GM12878 (cell line): ENCODE measurements at regions of chr7 and their contacts with region 1.

Region 1: GRCh38 chr7:27095897-27096767 is at the start of gene HOXA1:
- DNase-seq: peak; percentile 48
- ATAC-seq: peak; percentile 92
- H3K4me3 ChIP-seq: peak within 1 kb of the TSS; percentile 92
- H3K27ac ChIP-seq: no peak within 1 kb of the TSS
- H3K4me1 ChIP-seq: peaks cover 6% of the 10 kb centered on the region
- H3K27me3 ChIP-seq: peaks cover 0 to 7% of the 10 kb centered on the region in 2 experiments; a peak in 3 of 4 replicates
- CTCF ChIP-seq: no peak; a peak in 1 of 6 replicates
- EP300 ChIP-seq: no peak
- POLR2A ChIP-seq: peak; percentile 65
- RAD21 ChIP-seq: no peak
- polyA plus RNA-seq, gene HOXA1: 0.10 TPM in 1 of 2 experiments, not detected in the other

Region 2: GRCh38 chr7:26853788-26854393 is 242.2 kb before region 1 on chr7:
- CTCF ChIA-PET with region 1: interaction called, 7 read pairs
- POLR2A ChIA-PET with region 1: interaction called, 4 read pairs
- RAD21 ChIA-PET with region 1: interaction called, 4 read pairs
- SMC1A ChIA-PET with region 1: interaction called, 9 read pairs
- in situ Hi-C with region 1: no loop called
- intact Hi-C with region 1: loop called (anchors 2 kb)
- DNase-seq: no peak
- ATAC-seq: no peak
- H3K4me3 ChIP-seq: no peak overlapping the region
- H3K27ac ChIP-seq: no peak overlapping the region
- H3K4me1 ChIP-seq: 0 out of 2 replicates have a peak, but pooled peaks cover 5% of the 10 kb centered on the region
- H3K27me3 ChIP-seq: no peaks in the 10 kb centered on the region
- CTCF ChIP-seq: peak; percentile 27 to 42 (median 31); a peak in 4 of 6 replicates
- EP300 ChIP-seq: no peak
- POLR2A ChIP-seq: no peak
- RAD21 ChIP-seq: peak; percentile 50

Region 3: GRCh38 chr7:27080844-27081436 is 15.2 kb before region 1 on chr7:
- CTCF ChIA-PET with region 1: interaction called, 18 read pairs
- POLR2A ChIA-PET with region 1: interaction called, 15 read pairs
- RAD21 ChIA-PET with region 1: interaction called, 24 read pairs
- SMC1A ChIA-PET with region 1: interaction called, 110 read pairs
- in situ Hi-C with region 1: no loop called
- intact Hi-C with region 1: no loop called
- DNase-seq: no peak
- ATAC-seq: no peak
- H3K4me3 ChIP-seq: no peak overlapping the region
- H3K27ac ChIP-seq: no peak overlapping the region
- H3K4me1 ChIP-seq: no peaks in the 10 kb centered on the region
- H3K27me3 ChIP-seq: no peaks in the 10 kb centered on the region
- CTCF ChIP-seq: no peak
- EP300 ChIP-seq: no peak
- POLR2A ChIP-seq: no peak
- RAD21 ChIP-seq: no peak

Region 4: GRCh38 chr7:27150568-27151340 is 54.6 kb after region 1 on chr7:
- CTCF ChIA-PET with region 1: interaction called, 10 read pairs
- POLR2A ChIA-PET with region 1: interaction called, 3 read pairs
- RAD21 ChIA-PET with region 1: interaction called, 7 read pairs
- SMC1A ChIA-PET with region 1: interaction called, 4 read pairs
- in situ Hi-C with region 1: no loop called
- intact Hi-C with region 1: no loop called
- DNase-seq: no peak
- ATAC-seq: peak; percentile 96
- H3K4me3 ChIP-seq: peak overlapping the region; percentile 67
- H3K27ac ChIP-seq: no peak overlapping the region
- H3K4me1 ChIP-seq: no peaks in the 10 kb centered on the region; the same call in 1 of the 2 replicates
- H3K27me3 ChIP-seq: peaks cover 20 to 60% of the 10 kb centered on the region in 2 experiments
- CTCF ChIP-seq: peak; percentile 70 to 84 (median 74)
- EP300 ChIP-seq: no peak
- POLR2A ChIP-seq: no peak; the same call in 1 of the 2 replicates
- RAD21 ChIP-seq: peak; percentile 30; the same call in 1 of the 2 replicates